CD8-positive, alpha-beta memory T cell (primary cell): ENCODE measurements at regions of chr4 and their contacts with region 1.

Region 1: GRCh38 chr4:55395529-55396307 is at the start of gene TMEM165:
- DNase-seq: peak; percentile 84 to 91 (median 88)
- H3K4me3 ChIP-seq: peak within 1 kb of the TSS; percentile 72
- H3K4me3 Mint-ChIP-seq: peak within 1 kb of the TSS; percentile 93 to 100 (median 96)
- H3K27ac ChIP-seq: peak within 1 kb of the TSS; percentile 91
- H3K27ac Mint-ChIP-seq: peak within 1 kb of the TSS; percentile 87 to 99 (median 98)
- H3K4me1 ChIP-seq: peaks cover 37% of the 10 kb centered on the region
- H3K4me1 Mint-ChIP-seq: peaks cover 41 to 47% (median 44%) of the 10 kb centered on the region in 3 donors
- H3K27me3 ChIP-seq: no peaks in the 10 kb centered on the region
- H3K27me3 Mint-ChIP-seq: peaks cover 0 to 1% of the 10 kb centered on the region in 2 donors
- total RNA-seq, gene TMEM165: 69.1 to 76.5 TPM

Region 2: DNA sequence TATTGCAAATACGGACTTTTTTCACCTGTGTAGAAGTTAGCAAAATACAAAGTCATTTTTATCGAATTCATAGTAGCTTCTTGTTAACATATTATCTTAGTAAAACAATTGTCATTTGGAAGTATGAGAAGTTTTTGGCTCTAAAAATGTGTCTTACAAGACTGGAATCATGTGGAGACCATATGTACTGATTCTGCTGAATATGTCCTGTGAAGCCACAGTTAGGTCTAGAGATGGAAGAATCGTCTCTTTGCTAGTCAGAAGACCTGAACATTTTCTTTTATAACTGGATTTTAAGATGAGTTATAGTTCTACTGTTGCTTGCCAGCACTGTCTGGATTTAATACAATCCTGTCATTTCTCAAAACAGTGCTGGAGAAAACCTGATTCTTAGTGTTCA is 29.1 kb after region 1 on chr4:
- CTCF ChIA-PET with region 1: no interaction called
- POLR2A ChIA-PET with region 1: no interaction called
- DNase-seq: no peak
- H3K4me3 ChIP-seq: no peak overlapping the region
- H3K4me3 Mint-ChIP-seq: no peak overlapping the region
- H3K27ac ChIP-seq: no peak overlapping the region
- H3K27ac Mint-ChIP-seq: peak overlapping the region in 4 of 8 donors; percentile 7 to 54 (median 22)
- H3K4me1 ChIP-seq: no peaks in the 10 kb centered on the region
- H3K4me1 Mint-ChIP-seq: peaks cover 6 to 16% (median 15%) of the 10 kb centered on the region in 3 donors
- H3K27me3 ChIP-seq: no peaks in the 10 kb centered on the region
- H3K27me3 Mint-ChIP-seq: peaks cover 0 to 2% of the 10 kb centered on the region in 2 donors

Region 3: GRCh38 chr4:55546756-55547465 is 151.2 kb after region 1 on chr4 and contains the start of gene CLOCK:
- CTCF ChIA-PET with region 1: interaction called, 12 read pairs
- POLR2A ChIA-PET with region 1: interaction called, 21 read pairs
- DNase-seq: peak; percentile 78 to 88 (median 84)
- H3K4me3 ChIP-seq: peak within 1 kb of the TSS; percentile 71
- H3K4me3 Mint-ChIP-seq: peak within 1 kb of the TSS; percentile 90 to 98 (median 95)
- H3K27ac ChIP-seq: peak within 1 kb of the TSS; percentile 81
- H3K27ac Mint-ChIP-seq: peak within 1 kb of the TSS; percentile 87 to 99 (median 95)
- H3K4me1 ChIP-seq: peaks cover 6% of the 10 kb centered on the region
- H3K4me1 Mint-ChIP-seq: peaks cover 29 to 50% (median 43%) of the 10 kb centered on the region in 3 donors
- H3K27me3 ChIP-seq: no peaks in the 10 kb centered on the region
- H3K27me3 Mint-ChIP-seq: peaks cover 0 to 6% of the 10 kb centered on the region in 2 donors
- total RNA-seq, gene CLOCK: 13.3 to 16.4 TPM